Tibial artery (tissue), 4 donors: ENCODE measurements at regions of chr1 and their contacts with region 1.

Region 1: DNA sequence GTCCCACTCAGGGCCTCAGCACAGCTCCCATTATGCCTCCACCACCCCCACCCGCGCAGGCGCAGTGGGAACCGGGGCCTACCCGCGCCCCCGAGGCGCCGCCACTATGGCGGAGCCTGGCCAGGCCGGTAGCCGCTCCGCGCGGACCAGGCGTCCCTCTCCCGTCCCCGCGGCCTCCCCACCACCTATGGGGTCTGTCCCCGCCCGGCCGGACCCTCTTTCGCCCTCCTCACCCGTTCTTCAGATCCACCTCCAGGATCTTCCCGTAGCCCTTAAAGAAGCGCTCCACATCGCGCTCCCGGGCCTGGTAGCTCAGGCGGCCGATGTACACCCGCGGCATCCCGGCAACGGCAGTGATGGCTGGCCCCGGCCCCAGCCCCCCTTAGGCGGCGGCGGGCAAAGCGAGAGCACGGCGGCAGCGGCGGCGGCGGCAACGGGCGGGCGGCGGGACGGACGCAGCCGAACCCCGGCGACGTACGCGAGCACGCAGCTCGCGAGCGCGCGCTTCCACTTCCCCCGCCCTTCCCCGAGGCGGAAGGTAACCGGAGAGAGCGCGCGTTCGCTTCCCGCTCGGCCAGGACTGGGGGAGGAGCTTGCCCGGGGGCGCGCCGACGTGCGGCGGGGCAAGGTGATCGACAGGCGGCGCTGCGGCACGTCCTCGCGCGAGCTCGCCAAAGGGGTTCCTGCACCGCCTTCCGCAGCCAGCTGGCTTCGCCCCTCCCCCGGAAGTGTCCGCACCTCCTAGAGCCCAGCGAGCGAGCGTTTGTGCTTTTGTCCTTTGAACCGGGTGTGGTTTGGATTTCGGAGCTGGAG is at the start of gene SRSF4:
- DNase-seq: peak; percentile 98 to 100
- H3K4me3 ChIP-seq: peak within 1 kb of the TSS; percentile 78 to 82
- H3K27ac ChIP-seq: peak within 1 kb of the TSS; percentile 99
- H3K4me1 ChIP-seq: peaks cover 0 to 47% (median 38%) of the 10 kb centered on the region in 4 donors
- H3K27me3 ChIP-seq: no peaks in the 10 kb centered on the region
- CTCF ChIP-seq: peak; percentile 68

Region 2: DNA sequence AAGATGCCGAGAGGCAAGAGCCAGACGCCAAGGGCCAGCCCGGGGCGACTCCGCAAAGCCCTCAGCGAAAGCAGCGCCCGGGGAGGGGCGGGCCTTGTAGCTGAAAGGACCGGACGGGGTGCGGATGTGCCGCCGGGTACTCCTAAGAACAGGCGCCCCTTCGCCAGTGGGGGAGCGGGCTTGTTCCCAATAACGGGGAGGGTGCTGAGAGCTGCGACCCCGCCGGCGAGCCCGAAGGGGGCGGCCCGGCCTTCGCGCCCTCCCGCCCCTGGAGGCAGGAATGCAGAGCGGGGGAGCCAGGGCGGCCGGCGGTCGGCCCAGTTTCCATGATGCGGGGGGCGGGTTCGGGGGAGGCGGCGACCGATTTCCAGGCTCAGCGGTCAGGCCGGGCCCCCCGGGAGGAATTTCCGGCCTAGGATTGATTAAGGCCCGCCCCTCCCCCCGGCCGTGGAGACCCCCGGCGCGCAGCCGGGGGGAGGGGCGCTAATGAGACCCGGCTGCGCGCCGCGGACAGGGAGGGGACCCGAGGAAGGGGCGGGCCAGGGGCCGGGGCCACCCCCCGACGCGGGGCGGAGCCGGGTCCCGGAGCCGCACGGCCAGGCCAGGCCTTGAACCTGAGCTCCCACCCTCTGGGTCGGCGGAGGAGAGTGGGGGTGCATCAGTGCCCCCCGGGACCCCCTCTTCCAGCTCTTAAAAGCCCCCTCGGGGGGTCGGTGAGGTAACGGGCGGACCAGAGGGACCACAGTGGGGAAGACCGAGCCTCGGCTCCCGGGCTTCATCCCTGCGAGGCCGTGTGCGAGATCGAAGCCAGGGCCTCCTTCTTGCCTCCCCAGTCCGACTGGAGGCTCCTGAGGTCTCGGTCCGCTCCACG is 57.0 kb before region 1 on chr1:
- intact Hi-C with region 1: loop called (anchors 5 kb)
- DNase-seq: peak; percentile 74 to 91
- H3K4me3 ChIP-seq: peak overlapping the region; percentile 78 to 85
- H3K27ac ChIP-seq: peak overlapping the region; percentile 96 to 100
- H3K4me1 ChIP-seq: peaks cover 0 to 43% (median 27%) of the 10 kb centered on the region in 4 donors
- H3K27me3 ChIP-seq: no peaks in the 10 kb centered on the region
- CTCF ChIP-seq: peak; percentile 92 to 99

Region 3: GRCh38 chr1:29410476-29410875 is 228.9 kb after region 1 on chr1:
- intact Hi-C with region 1: no loop called
- DNase-seq: no peak
- H3K4me3 ChIP-seq: no peak overlapping the region
- H3K27ac ChIP-seq: no peak overlapping the region
- H3K4me1 ChIP-seq: no peaks in the 10 kb centered on the region
- H3K27me3 ChIP-seq: peaks cover 0 to 53% of the 10 kb centered on the region in 2 donors
- CTCF ChIP-seq: no peak

Region 4: DNA sequence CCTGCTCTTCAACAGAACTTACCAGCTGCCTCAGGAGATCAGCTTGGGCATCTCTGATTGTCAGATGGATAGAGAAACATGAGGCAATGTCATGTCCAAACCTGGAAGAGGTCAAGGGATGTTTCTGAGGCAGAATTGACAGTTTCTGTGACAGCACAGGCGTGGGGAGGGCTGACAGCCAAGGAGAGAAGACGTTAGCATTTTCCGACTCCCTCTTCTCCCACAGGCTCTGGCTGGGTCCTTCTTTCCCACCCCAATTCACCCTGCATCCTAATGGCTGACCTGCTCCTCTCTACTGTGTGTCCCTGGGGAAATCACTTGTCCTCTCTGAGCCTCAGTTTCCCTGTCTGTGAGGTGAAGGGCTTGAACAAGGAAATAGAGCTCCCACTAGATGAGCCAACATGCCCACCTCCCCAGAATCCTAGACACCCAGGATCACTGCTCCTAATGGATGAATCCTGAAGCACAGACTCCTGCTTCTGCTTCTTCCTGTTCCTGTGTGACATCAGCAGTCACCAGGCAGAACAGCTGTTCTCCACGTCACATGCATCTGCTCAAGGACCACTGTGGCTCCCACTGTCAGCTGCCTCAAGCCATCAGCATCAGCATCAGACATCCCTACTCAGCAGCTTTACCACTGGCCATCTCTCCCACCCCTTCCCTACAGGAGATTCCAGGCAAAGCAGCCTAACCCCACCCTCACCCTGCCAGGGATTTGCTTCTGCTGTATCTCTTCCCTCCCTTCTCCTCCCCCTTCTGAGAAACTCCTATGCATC is 1133.8 kb after region 1 on chr1:
- intact Hi-C with region 1: no loop called
- DNase-seq: peak in 1 of 2 donors; percentile 15
- H3K4me3 ChIP-seq: no peak overlapping the region
- H3K27ac ChIP-seq: no peak overlapping the region
- H3K4me1 ChIP-seq: no peaks in the 10 kb centered on the region
- H3K27me3 ChIP-seq: peaks cover 0 to 65% of the 10 kb centered on the region in 2 donors
- CTCF ChIP-seq: no peak